ENCODE measurements at regions of chr12 and their contacts with region 1.

Region 1: DNA sequence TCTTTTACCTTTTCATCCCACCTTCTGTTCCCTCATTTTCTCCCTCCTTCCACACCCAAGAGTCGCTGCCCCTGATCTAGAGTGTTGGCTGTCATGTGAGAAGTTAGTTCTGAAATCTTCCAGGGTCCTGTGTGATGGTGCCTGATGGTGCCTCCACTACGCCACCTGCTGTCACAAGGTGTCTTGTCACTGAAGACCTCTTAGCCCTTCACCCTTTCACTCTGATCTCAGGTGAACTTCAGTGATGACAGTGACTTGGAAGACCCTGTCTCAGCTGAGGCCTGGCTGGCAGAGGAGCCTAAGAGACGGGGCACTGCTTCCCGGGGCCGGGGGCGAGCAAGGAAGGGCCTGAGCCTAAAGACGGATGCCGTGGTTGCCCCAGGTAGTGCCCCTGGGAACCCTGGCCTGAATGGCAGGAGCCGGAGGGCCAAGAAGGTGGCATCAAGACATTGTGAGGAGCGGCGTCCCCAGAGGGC is 7.6 kb upstream of the PFDN5 start:
- DNase-seq: peak; percentile 40 to 56
- H3K4me3 ChIP-seq: no peak overlapping the region
- H3K27ac ChIP-seq: no peak overlapping the region
- H3K4me1 ChIP-seq: no peaks in the 10 kb centered on the region
- H3K27me3 ChIP-seq: no peaks in the 10 kb centered on the region
- CTCF ChIP-seq: peak; percentile 77

Region 2: GRCh38 chr12:52667511-52667910 is 620.3 kb before region 1 on chr12:
- CTCF ChIA-PET with region 1: no interaction called
- POLR2A ChIA-PET with region 1: no interaction called
- intact Hi-C with region 1: no loop called
- DNase-seq: no peak
- H3K4me3 ChIP-seq: no peak overlapping the region
- H3K27ac ChIP-seq: no peak overlapping the region
- H3K4me1 ChIP-seq: peaks cover 20% of the 10 kb centered on the region
- H3K27me3 ChIP-seq: no peaks in the 10 kb centered on the region
- CTCF ChIP-seq: peak; percentile 24; the same call in 1 of the 2 replicates

Region 3: DNA sequence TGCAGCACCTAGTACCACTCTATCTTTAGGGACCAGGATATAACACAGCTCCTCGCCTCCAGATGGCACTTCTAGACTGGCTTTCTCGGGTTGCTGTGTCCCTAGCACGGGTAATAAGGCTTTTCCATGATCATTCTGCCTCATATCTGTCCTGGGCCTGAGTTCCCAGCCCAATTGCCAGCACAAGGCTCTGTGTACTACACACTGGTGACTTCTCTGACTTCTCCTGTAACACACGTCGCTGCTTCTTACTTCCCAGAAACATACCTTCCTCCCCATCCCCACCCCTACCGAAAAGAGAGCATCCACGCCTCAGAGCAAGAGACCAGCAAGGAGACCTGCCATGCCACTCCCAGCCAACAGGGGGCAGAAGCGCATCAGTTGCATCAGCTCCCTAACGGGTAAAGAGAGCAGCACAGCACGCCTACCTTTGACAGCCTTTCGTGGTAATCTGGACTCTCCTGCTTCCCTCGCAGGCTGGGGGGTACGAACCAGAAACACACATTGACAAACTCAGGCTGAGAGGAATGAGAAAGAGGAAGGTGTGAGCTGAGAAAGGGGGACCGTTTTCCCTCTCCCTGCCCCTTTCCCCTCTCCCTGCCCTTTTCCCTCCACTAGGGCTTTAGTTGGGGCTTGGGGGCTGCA is 128.5 kb before region 1 on chr12:
- CTCF ChIA-PET with region 1: interaction called, 4 read pairs
- POLR2A ChIA-PET with region 1: interaction called, 3 read pairs
- intact Hi-C with region 1: loop called (anchors 1 kb)
- DNase-seq: peak in 1 of 2 experiments; percentile 77
- H3K4me3 ChIP-seq: no peak overlapping the region
- H3K27ac ChIP-seq: no peak overlapping the region
- H3K4me1 ChIP-seq: no peaks in the 10 kb centered on the region; the same call in 1 of the 2 replicates
- H3K27me3 ChIP-seq: no peaks in the 10 kb centered on the region
- CTCF ChIP-seq: peak; percentile 97

Region 4: DNA sequence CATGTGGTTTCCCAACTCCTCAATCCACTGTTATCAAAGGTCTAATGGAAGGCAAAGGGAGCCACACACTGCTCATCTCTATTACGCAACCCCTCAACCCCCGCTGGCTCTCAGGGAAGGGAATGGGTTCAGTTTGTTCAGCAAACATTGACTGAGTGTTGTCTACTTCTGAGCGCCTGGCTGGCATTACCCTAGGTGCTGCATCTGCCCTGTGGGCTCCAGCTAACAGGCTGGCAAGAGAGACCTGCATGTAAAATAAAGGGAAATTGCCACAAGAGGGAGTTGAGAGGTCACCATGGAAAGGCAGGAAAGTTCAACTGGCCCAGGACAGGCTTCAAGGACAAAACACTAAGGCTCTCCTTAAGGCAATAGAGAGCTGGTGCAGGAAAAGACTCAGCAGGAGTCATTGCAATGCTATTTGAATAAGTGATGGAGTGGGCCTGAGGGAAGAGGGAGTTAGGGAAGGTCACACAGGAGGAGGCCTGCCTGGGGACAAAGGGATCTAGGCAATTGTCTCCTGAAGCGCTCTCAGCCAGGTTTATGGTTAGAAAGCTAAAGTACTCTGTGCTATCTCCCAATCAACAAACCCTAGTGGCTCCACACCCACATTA is 112.8 kb before region 1 on chr12:
- CTCF ChIA-PET with region 1: no interaction called
- POLR2A ChIA-PET with region 1: no interaction called
- intact Hi-C with region 1: loop called (anchors 1 kb)
- DNase-seq: peak; percentile 21 to 63
- H3K4me3 ChIP-seq: no peak overlapping the region
- H3K27ac ChIP-seq: no peak overlapping the region
- H3K4me1 ChIP-seq: peaks cover 26% of the 10 kb centered on the region
- H3K27me3 ChIP-seq: no peaks in the 10 kb centered on the region
- CTCF ChIP-seq: peak; percentile 42; the same call in 1 of the 2 replicates

Region 5: GRCh38 chr12:53213348-53213747 is 74.4 kb before region 1 on chr12:
- CTCF ChIA-PET with region 1: no interaction called
- POLR2A ChIA-PET with region 1: no interaction called
- intact Hi-C with region 1: loop called (anchors 1 kb)
- DNase-seq: peak in 1 of 2 experiments; percentile 75
- H3K4me3 ChIP-seq: no peak overlapping the region
- H3K27ac ChIP-seq: no peak overlapping the region
- H3K4me1 ChIP-seq: peaks cover 30% of the 10 kb centered on the region
- H3K27me3 ChIP-seq: no peaks in the 10 kb centered on the region
- CTCF ChIP-seq: peak; percentile 92

Region 6: GRCh38 chr12:53231826-53232645 is 55.7 kb before region 1 on chr12 and contains the start of gene RARG:
- CTCF ChIA-PET with region 1: no interaction called
- POLR2A ChIA-PET with region 1: no interaction called
- intact Hi-C with region 1: no loop called
- DNase-seq: peak; percentile 83 to 90
- H3K4me3 ChIP-seq: peak within 1 kb of the TSS; percentile 100
- H3K27ac ChIP-seq: peak within 1 kb of the TSS; percentile 71
- H3K4me1 ChIP-seq: peaks cover 59% of the 10 kb centered on the region
- H3K27me3 ChIP-seq: no peaks in the 10 kb centered on the region
- CTCF ChIP-seq: no peak
- total RNA-seq, gene RARG: 118 and 124 TPM in 2 replicates

Region 7: GRCh38 chr12:53427905-53428594 is 140.3 kb after region 1 on chr12:
- CTCF ChIA-PET with region 1: no interaction called
- POLR2A ChIA-PET with region 1: no interaction called
- intact Hi-C with region 1: no loop called
- DNase-seq: peak; percentile 54 to 91
- H3K4me3 ChIP-seq: no peak overlapping the region
- H3K27ac ChIP-seq: peak overlapping the region; percentile 28
- H3K4me1 ChIP-seq: peaks cover 27% of the 10 kb centered on the region
- H3K27me3 ChIP-seq: no peaks in the 10 kb centered on the region
- CTCF ChIP-seq: no peak

Region 8: GRCh38 chr12:53492830-53493611 is 205.2 kb after region 1 on chr12:
- CTCF ChIA-PET with region 1: interaction called, 12 read pairs
- POLR2A ChIA-PET with region 1: no interaction called
- intact Hi-C with region 1: no loop called
- DNase-seq: peak; percentile 68 to 93
- H3K4me3 ChIP-seq: peak overlapping the region; percentile 64
- H3K27ac ChIP-seq: no peak overlapping the region
- H3K4me1 ChIP-seq: peaks cover 25% of the 10 kb centered on the region; the same call in 1 of the 2 replicates
- H3K27me3 ChIP-seq: no peaks in the 10 kb centered on the region
- CTCF ChIP-seq: no peak

Region 9: GRCh38 chr12:53626702-53627169 is 339.0 kb after region 1 on chr12:
- CTCF ChIA-PET with region 1: no interaction called
- POLR2A ChIA-PET with region 1: no interaction called
- intact Hi-C with region 1: no loop called
- DNase-seq: no peak
- H3K4me3 ChIP-seq: peak overlapping the region; percentile 82
- H3K27ac ChIP-seq: 0 out of 2 replicates have a peak overlapping the region, but pooled peaks have one; percentile 17
- H3K4me1 ChIP-seq: peaks cover 29% of the 10 kb centered on the region
- H3K27me3 ChIP-seq: no peaks in the 10 kb centered on the region
- CTCF ChIP-seq: no peak